BJ (cell line): ENCODE measurements at regions of chr16 and their contacts with region 1.

Region 1: GRCh38 chr16:27892881-27893280 is 170.6 kb downstream of the GSG1L start:
- DNase-seq: no peak
- H3K4me3 ChIP-seq: no peak overlapping the region
- H3K27me3 ChIP-seq: peaks cover 6% of the 10 kb centered on the region; the same call in 1 of the 2 replicates
- CTCF ChIP-seq: peak; percentile 14; the same call in 1 of the 2 replicates

Region 2: GRCh38 chr16:27389272-27389961 is 503.5 kb before region 1 on chr16:
- CTCF ChIA-PET with region 1: no interaction called
- POLR2A ChIA-PET with region 1: no interaction called
- DNase-seq: no peak
- H3K4me3 ChIP-seq: no peak overlapping the region
- H3K27me3 ChIP-seq: peaks cover 6% of the 10 kb centered on the region
- CTCF ChIP-seq: no peak

Region 3: GRCh38 chr16:27903046-27903655 is 10.3 kb after region 1 on chr16:
- CTCF ChIA-PET with region 1: no interaction called
- POLR2A ChIA-PET with region 1: interaction called, 10 read pairs
- DNase-seq: no peak
- H3K4me3 ChIP-seq: no peak overlapping the region
- H3K27me3 ChIP-seq: no peaks in the 10 kb centered on the region; the same call in none of the 2 replicates
- CTCF ChIP-seq: no peak